ENCODE measurements at regions of chr9 and their contacts with region 1.

Region 1: GRCh38 chr9:111438541-111439235 is 45.5 kb downstream of the ECPAS start:
- DNase-seq: no peak
- ATAC-seq: no peak
- H3K4me3 ChIP-seq: no peak overlapping the region
- H3K27ac ChIP-seq: no peak overlapping the region
- H3K4me1 ChIP-seq: no peaks in the 10 kb centered on the region
- H3K27me3 ChIP-seq: no peaks in the 10 kb centered on the region
- CTCF ChIP-seq: no peak
- POLR2A ChIP-seq: no peak

Region 2: DNA sequence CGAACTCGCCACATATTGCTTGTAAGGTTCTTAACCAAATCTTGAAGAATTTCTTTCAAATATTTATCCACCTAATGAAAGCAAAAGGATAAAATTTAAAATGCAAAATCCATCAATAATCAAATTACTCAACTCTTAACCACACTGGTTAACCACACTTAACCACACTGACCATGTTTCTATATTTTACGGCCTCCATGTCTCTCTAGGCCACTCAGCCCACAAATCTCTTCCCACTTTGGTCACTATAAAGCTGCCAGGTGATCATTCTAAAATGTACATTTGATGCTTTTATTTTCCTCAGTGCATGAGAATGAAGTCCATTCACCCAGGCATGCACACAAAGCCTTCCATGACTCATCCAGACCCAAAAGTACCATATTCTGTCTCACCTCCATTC is 52.3 kb before region 1 on chr9:
- in situ Hi-C with region 1: loop called in 1 of 4 experiments (anchors 10 kb)
- intact Hi-C with region 1: loop called (anchors 5 kb)
- DNase-seq: no peak
- ATAC-seq: no peak
- H3K4me3 ChIP-seq: no peak overlapping the region
- H3K27ac ChIP-seq: no peak overlapping the region
- H3K4me1 ChIP-seq: no peaks in the 10 kb centered on the region
- H3K27me3 ChIP-seq: no peaks in the 10 kb centered on the region
- CTCF ChIP-seq: no peak
- POLR2A ChIP-seq: no peak